ENCODE measurements at regions of chr10 and their contacts with region 1.

Region 1: DNA sequence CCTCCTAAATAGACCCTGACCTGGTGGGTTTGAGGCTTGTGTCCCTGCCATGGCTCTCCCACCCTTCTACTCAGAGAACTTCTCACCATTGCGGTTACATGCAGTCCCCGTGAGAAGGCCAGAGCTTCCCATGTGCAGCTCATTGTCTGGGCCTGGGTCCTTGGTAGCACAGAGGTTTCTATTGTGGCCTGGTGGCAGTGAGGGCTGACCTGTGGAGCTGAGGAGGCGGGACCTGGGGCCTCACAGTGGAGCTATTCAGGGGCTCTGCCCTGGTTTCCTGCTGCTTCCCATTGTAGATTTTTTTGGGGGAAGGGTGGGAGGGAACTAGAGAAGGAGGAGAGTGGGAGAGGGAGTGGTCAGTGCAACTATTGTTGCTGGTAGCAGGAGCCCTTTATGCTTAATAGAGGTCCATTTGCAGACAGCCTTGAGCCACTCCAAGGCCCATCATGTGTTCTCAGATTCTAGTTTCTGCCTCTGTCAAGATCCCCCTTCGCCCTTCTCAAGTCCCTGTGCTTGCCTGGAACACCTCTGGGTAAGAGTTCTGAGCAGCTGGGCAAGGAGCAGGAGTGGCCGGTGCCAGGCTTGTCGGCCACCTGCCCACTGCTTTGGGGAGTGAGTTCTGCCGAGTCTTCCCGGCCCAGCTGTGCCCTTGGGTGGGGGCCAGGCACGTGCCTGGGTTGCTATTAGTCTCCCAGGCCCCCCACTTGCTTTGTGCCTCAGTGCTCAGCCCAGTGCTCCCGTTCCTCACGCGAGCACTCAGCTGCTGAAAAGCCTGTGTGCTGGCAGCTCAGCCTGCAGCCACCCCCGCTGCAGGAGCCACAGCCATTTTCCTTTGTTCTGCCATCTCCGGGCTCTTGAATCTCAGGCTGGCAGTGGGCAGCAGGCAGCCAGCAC is 10.7 kb downstream of the TSPAN14 start:
- DNase-seq: peak in 2 of 9 donors; percentile 46 to 47
- ATAC-seq: peak; percentile 11
- H3K4me3 ChIP-seq: peak overlapping the region; percentile 57
- H3K4me3 Mint-ChIP-seq: peak overlapping the region; percentile 79 to 99 (median 88)
- H3K27ac ChIP-seq: peak overlapping the region; percentile 84
- H3K27ac Mint-ChIP-seq: peak overlapping the region; percentile 87 to 99 (median 98)
- H3K4me1 ChIP-seq: peaks cover 88 to 97% of the 10 kb centered on the region in 2 donors
- H3K4me1 Mint-ChIP-seq: peaks cover 75 to 100% (median 95%) of the 10 kb centered on the region in 7 donors
- H3K27me3 ChIP-seq: no peaks in the 10 kb centered on the region
- H3K27me3 Mint-ChIP-seq: no peaks in the 10 kb centered on the region

Region 2: DNA sequence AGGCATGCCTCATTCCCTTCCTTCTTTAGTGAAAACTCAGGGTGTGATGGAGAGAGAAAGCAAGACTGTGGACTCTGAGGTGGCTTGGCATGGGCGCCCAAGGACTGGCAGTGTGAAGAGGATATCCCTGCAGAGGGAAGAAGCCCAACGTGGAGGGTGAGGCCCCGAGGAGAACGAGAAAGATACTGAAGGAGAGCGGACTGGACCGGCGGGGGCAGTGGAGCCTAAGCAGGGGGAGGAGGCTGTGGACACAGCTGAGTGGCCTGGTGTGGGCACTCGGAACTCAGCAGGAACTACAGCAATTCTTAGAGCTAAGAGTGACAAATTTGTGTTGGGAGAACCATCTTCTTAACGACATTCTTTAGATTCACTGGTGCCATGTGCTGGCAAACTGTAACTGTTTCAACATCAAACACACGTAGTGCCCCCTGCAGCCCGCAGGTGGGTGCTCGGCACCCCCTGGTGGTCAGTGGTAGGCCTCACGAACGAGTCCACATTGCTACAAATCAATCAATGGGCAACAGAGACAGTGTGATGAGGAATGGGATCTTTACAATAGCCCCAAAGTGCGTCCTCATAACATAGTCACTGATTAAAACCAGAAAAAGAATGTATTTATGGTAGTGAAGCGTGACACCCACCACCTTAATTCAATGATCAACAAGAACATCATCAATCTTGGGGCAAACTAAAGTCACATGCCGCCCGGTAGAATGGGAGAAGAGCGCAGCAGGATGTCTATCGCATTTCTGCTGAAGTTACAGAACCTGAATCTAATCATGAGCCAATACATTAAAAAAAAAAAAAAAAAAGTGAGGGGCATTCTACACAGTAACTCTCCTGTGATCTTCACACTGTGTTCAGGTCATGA is 856.1 kb before region 1 on chr10:
- CTCF ChIA-PET with region 1: no interaction called
- POLR2A ChIA-PET with region 1: no interaction called
- intact Hi-C with region 1: no loop called
- DNase-seq: peak in 6 of 9 donors; percentile 7 to 51 (median 15)
- ATAC-seq: peak; percentile 38
- H3K4me3 ChIP-seq: no peak overlapping the region
- H3K4me3 Mint-ChIP-seq: no peak overlapping the region
- H3K27ac ChIP-seq: no peak overlapping the region
- H3K27ac Mint-ChIP-seq: no peak overlapping the region
- H3K4me1 ChIP-seq: no peaks in the 10 kb centered on the region
- H3K4me1 Mint-ChIP-seq: no peaks in the 10 kb centered on the region
- H3K27me3 ChIP-seq: no peaks in the 10 kb centered on the region
- H3K27me3 Mint-ChIP-seq: peaks cover 4 to 12% (median 7%) of the 10 kb centered on the region in 5 donors

Region 3: GRCh38 chr10:80522801-80523237 is 58.0 kb after region 1 on chr10:
- CTCF ChIA-PET with region 1: interaction called, 3 read pairs
- POLR2A ChIA-PET with region 1: interaction called, 10 read pairs
- intact Hi-C with region 1: no loop called
- DNase-seq: peak in 1 of 9 donors; percentile 46
- ATAC-seq: peak; percentile 26
- H3K4me3 ChIP-seq: no peak overlapping the region
- H3K4me3 Mint-ChIP-seq: peak overlapping the region in 4 of 10 donors; percentile 2 to 42 (median 40)
- H3K27ac ChIP-seq: peak overlapping the region; percentile 22
- H3K27ac Mint-ChIP-seq: peak overlapping the region; percentile 66 to 98 (median 79)
- H3K4me1 ChIP-seq: peaks cover 16 to 32% of the 10 kb centered on the region in 2 donors
- H3K4me1 Mint-ChIP-seq: peaks cover 39 to 79% (median 65%) of the 10 kb centered on the region in 7 donors
- H3K27me3 ChIP-seq: no peaks in the 10 kb centered on the region
- H3K27me3 Mint-ChIP-seq: no peaks in the 10 kb centered on the region